Mammary epithelial cell (primary cell): ENCODE measurements at regions of chr12 and their contacts with region 1.

Region 1: DNA sequence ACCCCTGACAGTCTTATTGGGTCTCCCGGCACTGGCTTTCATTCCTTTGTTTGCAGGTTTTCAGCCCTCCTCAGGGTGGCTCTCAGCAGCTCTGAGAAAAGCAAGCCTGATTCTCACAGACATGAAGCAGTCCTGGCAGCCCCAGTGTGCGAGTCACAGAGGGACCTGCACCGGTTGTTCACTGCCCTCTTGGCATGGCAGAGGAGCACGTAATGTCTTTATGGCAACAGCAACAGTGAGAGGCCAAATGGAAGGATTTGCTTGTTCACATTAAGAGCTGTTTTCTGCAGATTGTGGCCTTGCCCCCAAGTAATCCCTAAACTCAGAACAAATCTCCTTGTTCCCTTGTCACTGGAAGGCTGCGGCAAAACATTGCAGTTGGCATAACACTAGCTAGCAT is 3.4 kb downstream of the KCNA5 start:
- DNase-seq: no peak
- H3K4me3 ChIP-seq: no peak overlapping the region
- H3K27ac ChIP-seq: no peak overlapping the region
- H3K4me1 ChIP-seq: no peaks in the 10 kb centered on the region
- H3K27me3 ChIP-seq: peaks cover 20% of the 10 kb centered on the region
- CTCF ChIP-seq: no peak

Region 2: DNA sequence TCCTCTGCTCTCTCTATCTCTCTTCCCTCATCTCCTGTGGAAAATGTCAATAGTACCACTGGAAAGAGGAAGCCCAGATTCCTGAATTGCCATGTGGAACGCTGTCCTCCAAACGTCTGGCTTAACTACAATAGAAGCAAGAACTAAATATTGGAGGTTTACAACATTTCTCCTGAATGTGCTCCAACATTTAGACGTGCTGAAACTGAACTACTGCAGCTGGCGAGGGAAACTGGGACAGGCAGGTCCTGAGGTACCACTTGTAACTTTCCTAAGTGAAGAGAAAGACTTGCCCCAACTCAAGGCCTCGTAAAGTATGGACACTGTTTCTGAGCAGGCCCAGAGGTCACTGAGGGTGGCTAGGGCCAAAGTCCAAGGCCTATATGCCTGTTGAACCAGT is 572.5 kb after region 1 on chr12:
- CTCF ChIA-PET with region 1: no interaction called
- dilution Hi-C with region 1: no loop called
- in situ Hi-C with region 1: no loop called
- intact Hi-C with region 1: loop called (anchors 5 kb)
- DNase-seq: no peak
- H3K4me3 ChIP-seq: no peak overlapping the region
- H3K27ac ChIP-seq: no peak overlapping the region
- H3K4me1 ChIP-seq: no peaks in the 10 kb centered on the region
- H3K27me3 ChIP-seq: no peaks in the 10 kb centered on the region
- CTCF ChIP-seq: no peak